PC-3 (cell line): ENCODE measurements at regions of chr17 and their contacts with region 1.

Region 1: DNA sequence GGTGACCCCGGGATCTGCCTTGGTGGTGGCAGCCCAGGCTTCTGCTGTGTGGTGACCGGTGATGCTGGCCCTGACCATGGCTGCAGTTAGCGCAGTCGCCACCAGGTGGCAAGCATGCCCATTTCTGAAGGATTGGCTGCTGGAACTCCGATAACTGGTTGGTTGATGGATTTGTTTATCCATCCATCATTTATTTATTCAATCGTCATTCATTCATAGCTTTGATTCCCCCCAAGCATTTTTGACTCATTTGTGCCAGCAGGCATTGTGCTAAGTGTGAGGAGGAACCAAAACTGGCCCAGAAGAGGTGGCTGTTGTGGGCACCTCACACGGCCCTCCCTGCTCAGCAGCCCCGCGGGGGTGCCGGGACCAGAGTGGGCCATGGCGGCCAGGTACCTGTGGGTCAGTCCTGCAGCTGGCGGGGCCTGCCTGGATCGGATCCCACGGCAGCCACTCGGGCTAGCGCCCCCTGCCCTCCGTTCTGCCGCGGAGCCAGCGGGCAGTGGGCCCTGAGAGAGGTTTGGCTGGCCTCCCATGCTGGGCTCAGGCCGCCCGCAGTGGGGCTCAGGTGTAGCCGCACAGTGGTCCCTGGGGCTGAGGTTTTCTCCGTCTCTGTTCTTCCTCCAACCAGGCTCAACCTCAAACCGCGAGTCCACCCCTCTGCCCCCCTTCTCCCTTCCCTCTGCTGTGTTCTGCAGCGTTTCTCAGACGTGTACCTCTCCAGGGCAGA is 28.8 kb upstream of the ITGA3 start:
- DNase-seq: peak; percentile 98
- ATAC-seq: peak; percentile 32
- H3K4me3 ChIP-seq: peak overlapping the region; percentile 62
- H3K27ac ChIP-seq: peak overlapping the region; percentile 96
- H3K4me1 ChIP-seq: peaks cover 31% of the 10 kb centered on the region
- H3K27me3 ChIP-seq: no peaks in the 10 kb centered on the region
- CTCF ChIP-seq: peak; percentile 97

Region 2: GRCh38 chr17:50055426-50056230 is 28.6 kb after region 1 on chr17 and contains the start of gene ITGA3:
- CTCF ChIA-PET with region 1: interaction called, 37 read pairs
- POLR2A ChIA-PET with region 1: interaction called, 65 read pairs
- intact Hi-C with region 1: loop called (anchors 1 kb)
- DNase-seq: peak; percentile 98
- ATAC-seq: peak; percentile 36
- H3K4me3 ChIP-seq: peak within 1 kb of the TSS; percentile 90
- H3K27ac ChIP-seq: peak within 1 kb of the TSS; percentile 96
- H3K4me1 ChIP-seq: peaks cover 79% of the 10 kb centered on the region
- H3K27me3 ChIP-seq: no peaks in the 10 kb centered on the region
- CTCF ChIP-seq: no peak
- total RNA-seq, gene ITGA3: 598 and 763 TPM in 2 replicates

Region 3: GRCh38 chr17:50064258-50065001 is 37.4 kb after region 1 on chr17:
- CTCF ChIA-PET with region 1: interaction called, 21 read pairs
- POLR2A ChIA-PET with region 1: interaction called, 39 read pairs
- intact Hi-C with region 1: loop called (anchors 1 kb)
- DNase-seq: peak; percentile 100
- ATAC-seq: peak; percentile 58
- H3K4me3 ChIP-seq: peak overlapping the region; percentile 10; the same call in 1 of the 2 replicates
- H3K27ac ChIP-seq: peak overlapping the region; percentile 96
- H3K4me1 ChIP-seq: peaks cover 76% of the 10 kb centered on the region
- H3K27me3 ChIP-seq: no peaks in the 10 kb centered on the region
- CTCF ChIP-seq: no peak

Region 4: GRCh38 chr17:50087246-50087911 is 60.3 kb after region 1 on chr17:
- CTCF ChIA-PET with region 1: interaction called, 12 read pairs
- POLR2A ChIA-PET with region 1: no interaction called
- intact Hi-C with region 1: loop called (anchors 1 kb)
- DNase-seq: peak; percentile 88
- ATAC-seq: peak; percentile 61
- H3K4me3 ChIP-seq: no peak overlapping the region
- H3K27ac ChIP-seq: no peak overlapping the region
- H3K4me1 ChIP-seq: no peaks in the 10 kb centered on the region
- H3K27me3 ChIP-seq: no peaks in the 10 kb centered on the region
- CTCF ChIP-seq: peak; percentile 99

Region 5: DNA sequence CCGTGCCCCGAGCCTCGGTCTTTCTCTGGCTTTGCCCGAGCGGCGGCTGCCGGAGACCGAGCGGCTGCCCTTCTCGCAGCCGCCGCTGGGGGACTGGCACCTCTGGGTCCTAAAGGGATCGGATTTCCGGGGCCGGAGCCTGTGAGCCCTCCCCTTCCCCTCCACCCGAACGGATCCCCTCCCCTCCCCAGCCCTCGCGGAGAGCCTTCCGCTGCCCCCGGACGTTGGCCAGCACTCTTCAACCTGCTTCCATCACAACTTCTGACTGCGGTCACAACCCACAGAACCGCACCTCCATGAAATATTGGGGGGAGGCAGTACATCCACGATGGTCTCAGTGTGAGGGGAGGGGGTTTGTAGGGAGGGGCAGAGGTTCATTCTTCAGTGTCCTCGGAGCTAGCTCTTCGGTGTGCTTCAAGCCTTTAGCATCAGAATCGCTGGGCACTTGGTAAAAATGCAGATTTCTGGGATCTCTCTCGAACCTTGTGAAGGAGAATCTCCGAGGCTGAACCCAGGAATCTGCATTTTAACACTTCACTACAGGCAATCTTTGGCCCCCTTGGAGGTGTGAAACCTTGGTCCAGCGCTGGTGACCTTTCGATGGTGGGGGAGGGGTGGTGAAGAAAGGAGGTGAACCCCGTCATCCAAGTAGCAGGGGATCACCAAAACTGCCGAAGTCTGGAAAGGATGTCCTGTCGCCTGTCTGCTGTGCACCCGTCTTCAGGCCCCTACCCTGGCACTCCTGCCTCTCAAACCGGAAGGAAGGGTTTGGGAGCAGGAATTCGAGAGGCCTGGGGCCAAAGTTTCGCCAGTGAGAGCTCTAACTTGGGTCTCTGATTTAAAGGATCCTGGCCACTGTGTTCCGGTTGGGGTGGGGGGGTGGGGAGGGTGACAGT is 124.2 kb after region 1 on chr17:
- CTCF ChIA-PET with region 1: no interaction called
- POLR2A ChIA-PET with region 1: no interaction called
- intact Hi-C with region 1: loop called (anchors 5 kb)
- DNase-seq: peak; percentile 97
- ATAC-seq: peak; percentile 57
- H3K4me3 ChIP-seq: peak overlapping the region; percentile 90
- H3K27ac ChIP-seq: peak overlapping the region; percentile 82
- H3K4me1 ChIP-seq: peaks cover 51% of the 10 kb centered on the region
- H3K27me3 ChIP-seq: no peaks in the 10 kb centered on the region
- CTCF ChIP-seq: peak; percentile 28; the same call in 1 of the 2 replicates